GM12878 (cell line): ENCODE measurements at regions of chr4 and their contacts with region 1.

Region 1: GRCh38 chr4:6824772-6825402 is 42.4 kb downstream of the KIAA0232 start:
- DNase-seq: no peak
- ATAC-seq: no peak
- H3K4me3 ChIP-seq: no peak overlapping the region
- H3K27ac ChIP-seq: no peak overlapping the region
- H3K4me1 ChIP-seq: 0 out of 2 replicates have a peak, but pooled peaks cover 3% of the 10 kb centered on the region
- H3K27me3 ChIP-seq: no peaks in the 10 kb centered on the region
- CTCF ChIP-seq: no peak
- EP300 ChIP-seq: no peak
- POLR2A ChIP-seq: no peak
- RAD21 ChIP-seq: no peak

Region 2: DNA sequence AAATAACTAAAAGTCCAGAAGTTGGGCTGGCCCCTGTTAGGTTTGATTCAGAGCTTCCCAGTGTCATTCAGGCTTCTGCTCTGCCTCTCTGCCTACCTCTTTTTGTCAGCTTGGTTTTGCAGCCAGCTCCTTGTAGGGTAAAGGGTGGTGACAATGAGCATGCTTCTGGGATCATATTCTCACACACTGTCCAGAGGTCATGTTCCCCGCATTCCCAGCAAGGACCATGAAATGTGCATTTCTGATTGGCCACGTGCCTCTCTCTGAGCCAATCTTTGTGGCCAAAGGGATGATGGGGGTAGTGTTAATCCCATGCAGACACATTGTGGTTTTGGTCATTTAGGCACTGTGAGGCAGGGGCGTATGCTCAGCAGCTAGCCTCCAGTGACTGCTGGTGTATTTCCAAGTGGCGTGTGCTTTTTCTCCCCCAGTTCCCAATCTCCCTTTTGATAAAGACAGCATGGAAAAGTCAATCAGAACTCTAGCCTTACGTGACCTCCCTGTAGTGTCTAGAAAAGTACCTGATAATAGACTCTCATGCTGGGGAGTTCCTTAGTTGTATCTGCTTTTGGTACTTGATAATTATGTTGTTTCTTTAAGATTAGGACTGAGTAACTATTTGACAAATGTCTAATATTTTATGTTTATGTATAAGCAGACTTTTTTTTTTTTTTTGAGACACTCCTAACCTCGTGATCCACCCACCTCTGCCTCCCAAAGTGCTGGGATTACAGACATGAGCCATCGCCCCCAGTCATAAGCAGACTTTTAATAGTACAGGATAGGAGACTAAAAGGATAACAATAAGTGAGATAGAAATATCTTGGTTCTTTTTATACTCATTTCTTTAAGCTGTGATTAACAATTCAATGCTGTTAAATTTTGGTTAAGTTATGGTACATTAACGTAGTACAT is 15.4 kb after region 1 on chr4:
- CTCF ChIA-PET with region 1: interaction called, 7 read pairs
- POLR2A ChIA-PET with region 1: interaction called, 13 read pairs
- RAD21 ChIA-PET with region 1: no interaction called
- SMC1A ChIA-PET with region 1: interaction called, 5 read pairs
- in situ Hi-C with region 1: no loop called
- intact Hi-C with region 1: no loop called
- DNase-seq: no peak
- ATAC-seq: no peak
- H3K4me3 ChIP-seq: no peak overlapping the region
- H3K27ac ChIP-seq: no peak overlapping the region
- H3K4me1 ChIP-seq: no peaks in the 10 kb centered on the region
- H3K27me3 ChIP-seq: no peaks in the 10 kb centered on the region
- CTCF ChIP-seq: no peak
- EP300 ChIP-seq: no peak
- POLR2A ChIP-seq: no peak
- RAD21 ChIP-seq: no peak